Right ventricle myocardium superior (tissue), 1 donor: ENCODE measurements at regions of chr12 and their contacts with region 1.

Region 1: DNA sequence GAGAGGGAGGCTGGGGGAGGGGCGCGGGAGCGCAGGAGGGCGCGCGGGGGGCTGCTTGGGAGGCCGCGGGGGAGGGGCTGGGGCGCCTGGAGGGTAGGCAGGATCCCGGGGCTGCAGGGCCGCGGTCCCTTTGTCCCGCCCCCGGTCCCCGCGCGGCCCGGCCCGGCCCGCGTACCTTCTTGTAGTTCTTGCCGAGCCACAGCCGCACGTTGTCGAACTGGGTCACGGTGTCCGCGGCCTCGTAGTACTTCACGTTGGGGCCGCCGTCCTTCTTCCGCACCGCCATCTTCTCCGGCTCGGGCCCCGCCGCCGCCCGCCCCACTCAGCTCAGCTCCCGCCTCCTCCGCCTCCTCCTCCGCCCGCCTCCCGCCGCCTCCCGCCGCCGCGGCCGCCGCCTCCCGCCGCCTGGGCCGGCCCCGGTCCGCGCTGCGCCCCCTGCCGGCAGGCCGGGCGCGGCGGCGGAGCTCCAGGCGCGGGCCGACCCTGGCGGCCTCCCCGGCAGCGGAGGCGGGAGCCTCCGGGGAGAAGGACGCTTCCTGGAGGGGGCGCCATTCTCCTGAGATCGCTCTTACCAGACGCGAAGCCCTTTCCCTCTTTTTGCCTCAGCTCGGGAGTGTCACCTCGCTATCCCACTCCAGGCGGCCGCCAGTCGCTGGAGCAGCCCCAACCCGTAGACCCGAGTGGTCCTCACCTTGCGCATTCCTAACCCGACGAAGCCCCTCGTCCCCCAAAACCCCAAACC is at the start of gene SMARCC2:
- DNase-seq: peak; percentile 92
- ATAC-seq: peak; percentile 90
- total RNA-seq, gene SMARCC2: 63.4 TPM

Region 2: DNA sequence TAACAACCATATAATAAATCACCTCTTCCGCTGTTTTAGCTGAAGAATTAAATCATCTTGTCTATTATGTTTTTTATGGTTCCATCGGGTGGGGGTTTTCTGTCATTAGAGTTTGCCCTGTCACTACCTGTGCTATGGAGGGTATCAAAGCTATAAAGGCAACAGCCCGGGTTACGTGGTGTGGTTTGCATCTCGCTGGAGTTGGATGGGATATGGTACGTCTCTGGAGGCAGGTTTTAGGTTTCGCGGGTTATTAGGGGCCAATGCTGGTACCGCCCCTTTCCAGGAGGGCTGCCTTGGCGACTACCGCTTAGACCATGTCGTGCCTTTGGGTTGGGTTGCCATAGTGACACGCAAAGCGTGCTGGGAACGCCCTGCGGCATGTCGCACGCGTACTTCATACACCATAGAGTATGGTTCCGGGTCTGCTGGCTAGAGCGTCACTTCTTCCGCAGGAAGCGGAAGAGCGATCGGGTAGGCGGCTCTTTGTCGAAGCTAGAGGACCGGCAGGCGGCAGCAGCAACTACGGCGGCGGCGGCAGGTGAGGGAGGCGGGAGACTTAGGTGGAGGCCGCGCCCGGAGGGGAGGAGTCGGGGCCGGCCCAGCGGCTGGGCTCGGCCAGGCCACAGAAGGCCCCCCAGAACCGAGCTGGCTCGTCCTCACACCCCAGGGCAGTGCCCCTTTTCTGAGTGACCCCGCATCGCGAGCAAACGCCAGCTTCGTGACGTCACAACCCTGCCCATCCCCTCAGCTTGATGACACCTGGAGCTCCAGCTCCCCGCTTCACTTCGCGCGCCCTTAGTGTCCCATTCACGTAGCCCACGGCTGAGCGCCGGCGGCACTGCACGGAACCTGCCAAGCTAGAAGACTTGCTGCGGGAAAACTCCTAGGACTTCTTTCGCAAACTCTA is 71.3 kb before region 1 on chr12 and contains the start of gene ZC3H10:
- intact Hi-C with region 1: loop called (anchors 2 kb)
- DNase-seq: peak; percentile 98
- ATAC-seq: peak; percentile 84
- total RNA-seq, gene ZC3H10: 5.8 TPM

Region 3: DNA sequence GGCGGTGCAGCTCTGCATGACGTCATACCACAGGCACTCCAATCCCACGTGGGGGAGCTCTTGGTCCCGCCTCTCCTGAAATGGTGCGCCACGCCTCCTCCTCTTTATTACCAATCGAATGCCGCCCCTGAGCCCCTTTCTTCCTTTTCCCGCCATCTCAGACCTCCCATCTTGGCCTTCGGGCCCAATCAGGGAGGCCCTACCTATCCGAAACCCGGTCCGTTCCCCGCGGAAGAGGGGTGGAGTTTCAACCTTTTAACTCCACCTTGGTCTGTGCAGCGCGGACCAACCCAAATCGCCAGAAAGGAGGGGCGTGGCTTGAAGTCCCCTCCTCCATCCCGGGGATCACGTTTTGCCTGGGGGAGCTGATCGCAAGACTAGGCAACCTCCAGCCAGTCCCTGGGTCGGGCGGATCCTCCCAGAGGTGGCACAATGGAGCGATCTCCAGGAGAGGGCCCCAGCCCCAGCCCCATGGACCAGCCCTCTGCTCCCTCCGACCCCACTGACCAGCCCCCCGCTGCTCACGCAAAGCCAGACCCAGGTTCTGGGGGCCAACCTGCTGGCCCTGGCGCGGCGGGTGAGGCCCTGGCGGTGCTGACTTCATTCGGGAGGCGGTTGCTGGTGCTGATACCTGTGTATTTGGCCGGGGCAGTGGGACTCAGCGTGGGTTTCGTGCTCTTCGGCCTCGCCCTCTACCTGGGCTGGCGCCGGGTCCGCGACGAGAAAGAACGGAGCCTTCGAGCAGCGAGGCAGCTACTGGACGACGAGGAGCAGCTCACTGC is 61.3 kb before region 1 on chr12 and contains the start of gene ESYT1:
- intact Hi-C with region 1: no loop called
- DNase-seq: peak; percentile 98
- ATAC-seq: peak; percentile 94
- total RNA-seq, gene ESYT1: 27.0 TPM

Region 4: GRCh38 chr12:56221527-56222387 is 32.4 kb after region 1 on chr12 and contains the start of gene RNF41:
- intact Hi-C with region 1: loop called (anchors 2 kb)
- DNase-seq: peak; percentile 99
- ATAC-seq: peak; percentile 93
- total RNA-seq, gene RNF41: 48.1 TPM

Region 5: DNA sequence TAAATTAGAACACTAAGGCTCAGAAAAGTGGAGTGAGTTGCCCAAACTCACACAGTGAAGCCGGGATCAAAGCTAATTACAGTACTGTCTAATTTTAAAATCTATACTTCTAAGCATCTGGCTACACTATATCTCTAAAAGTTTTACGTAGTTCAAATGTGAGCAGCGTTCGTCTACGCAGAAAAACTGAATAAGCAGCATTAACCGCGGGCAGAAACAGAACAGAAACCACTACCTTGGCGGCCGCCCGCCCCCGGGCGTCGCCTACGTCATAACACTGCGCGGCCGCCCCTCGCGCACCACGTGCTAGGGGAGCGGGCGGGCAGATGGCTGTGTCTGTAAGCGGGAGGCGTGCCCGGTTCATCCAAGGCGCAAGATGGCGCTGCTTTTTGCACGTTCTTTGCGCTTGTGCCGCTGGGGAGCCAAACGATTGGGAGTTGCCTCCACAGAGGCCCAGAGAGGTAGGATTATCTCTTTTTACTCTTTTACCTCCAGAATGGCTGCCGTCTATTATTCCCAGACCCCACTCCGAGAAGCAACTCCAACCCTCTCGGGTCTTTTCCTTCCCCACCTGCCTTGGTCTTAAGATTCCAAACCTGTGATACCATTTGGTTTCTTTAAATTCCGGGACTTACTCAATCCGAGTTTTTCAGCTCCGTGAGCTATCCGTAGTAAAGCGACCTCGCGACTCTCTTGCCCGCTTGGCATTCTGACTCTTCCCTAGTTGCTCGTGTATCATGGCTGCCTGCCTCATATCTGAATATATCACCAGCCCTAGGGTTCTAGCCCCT is 279.1 kb after region 1 on chr12 and contains the start of gene SPRYD4:
- intact Hi-C with region 1: loop called (anchors 5 kb)
- DNase-seq: peak; percentile 96
- ATAC-seq: peak; percentile 98
- total RNA-seq, gene SPRYD4: 2.9 TPM